ENCODE measurements at regions of chr11 and their contacts with region 1.

Region 1: DNA sequence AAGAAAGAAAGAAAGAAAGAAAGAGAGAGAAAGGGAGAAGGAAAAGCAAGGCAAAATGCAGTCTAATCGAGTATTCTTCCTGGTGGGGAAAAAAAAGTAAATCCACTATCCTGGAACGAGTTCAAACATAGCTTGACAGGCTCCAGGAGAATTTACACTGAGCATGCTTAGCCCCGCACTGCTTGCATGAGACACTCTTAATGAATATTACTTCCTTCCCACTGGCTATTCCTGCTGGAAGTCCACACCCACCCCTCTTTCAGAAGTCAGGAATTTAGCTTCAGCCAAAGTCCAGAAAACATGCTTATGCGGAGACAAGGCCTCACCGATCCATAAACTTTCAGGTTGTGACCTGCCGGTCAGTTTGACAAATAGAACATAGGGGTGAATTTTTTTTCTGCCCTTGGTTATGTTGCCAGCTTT is 251.8 kb upstream of the BLID start:
- DNase-seq: peak; percentile 74
- H3K4me3 Mint-ChIP-seq: peak overlapping the region; percentile 55
- H3K27ac Mint-ChIP-seq: peak overlapping the region; percentile 80
- H3K4me1 Mint-ChIP-seq: peaks cover 43% of the 10 kb centered on the region
- H3K27me3 Mint-ChIP-seq: no peaks in the 10 kb centered on the region
- CTCF ChIP-seq: no peak

Region 2: GRCh38 chr11:122215244-122215992 is 152.4 kb before region 1 on chr11:
- CTCF ChIA-PET with region 1: no interaction called
- POLR2A ChIA-PET with region 1: interaction called, 4 read pairs
- intact Hi-C with region 1: loop called (anchors 10 kb)
- DNase-seq: peak; percentile 66
- H3K4me3 Mint-ChIP-seq: no peak overlapping the region
- H3K27ac Mint-ChIP-seq: no peak overlapping the region
- H3K4me1 Mint-ChIP-seq: peaks cover 21% of the 10 kb centered on the region
- H3K27me3 Mint-ChIP-seq: no peaks in the 10 kb centered on the region
- CTCF ChIP-seq: peak; percentile 89

Region 3: GRCh38 chr11:122422707-122423106 is 54.9 kb after region 1 on chr11:
- CTCF ChIA-PET with region 1: no interaction called
- POLR2A ChIA-PET with region 1: interaction called, 43 read pairs
- intact Hi-C with region 1: no loop called
- DNase-seq: peak; percentile 95
- H3K4me3 Mint-ChIP-seq: peak overlapping the region; percentile 76
- H3K27ac Mint-ChIP-seq: peak overlapping the region; percentile 97
- H3K4me1 Mint-ChIP-seq: peaks cover 42% of the 10 kb centered on the region
- H3K27me3 Mint-ChIP-seq: no peaks in the 10 kb centered on the region
- CTCF ChIP-seq: no peak

Region 4: GRCh38 chr11:122468965-122469364 is 101.1 kb after region 1 on chr11:
- CTCF ChIA-PET with region 1: no interaction called
- POLR2A ChIA-PET with region 1: no interaction called
- intact Hi-C with region 1: no loop called
- DNase-seq: no peak
- H3K4me3 Mint-ChIP-seq: no peak overlapping the region
- H3K27ac Mint-ChIP-seq: no peak overlapping the region
- H3K4me1 Mint-ChIP-seq: no peaks in the 10 kb centered on the region
- H3K27me3 Mint-ChIP-seq: no peaks in the 10 kb centered on the region
- CTCF ChIP-seq: no peak

Region 5: GRCh38 chr11:122491509-122491908 is 123.7 kb after region 1 on chr11:
- CTCF ChIA-PET with region 1: no interaction called
- POLR2A ChIA-PET with region 1: no interaction called
- intact Hi-C with region 1: loop called (anchors 5 kb)
- DNase-seq: peak; percentile 60
- H3K4me3 Mint-ChIP-seq: no peak overlapping the region
- H3K27ac Mint-ChIP-seq: peak overlapping the region; percentile 1
- H3K4me1 Mint-ChIP-seq: peaks cover 24% of the 10 kb centered on the region
- H3K27me3 Mint-ChIP-seq: no peaks in the 10 kb centered on the region
- CTCF ChIP-seq: no peak